ENCODE measurements at regions of chr9 and their contacts with region 1.

Region 1: DNA sequence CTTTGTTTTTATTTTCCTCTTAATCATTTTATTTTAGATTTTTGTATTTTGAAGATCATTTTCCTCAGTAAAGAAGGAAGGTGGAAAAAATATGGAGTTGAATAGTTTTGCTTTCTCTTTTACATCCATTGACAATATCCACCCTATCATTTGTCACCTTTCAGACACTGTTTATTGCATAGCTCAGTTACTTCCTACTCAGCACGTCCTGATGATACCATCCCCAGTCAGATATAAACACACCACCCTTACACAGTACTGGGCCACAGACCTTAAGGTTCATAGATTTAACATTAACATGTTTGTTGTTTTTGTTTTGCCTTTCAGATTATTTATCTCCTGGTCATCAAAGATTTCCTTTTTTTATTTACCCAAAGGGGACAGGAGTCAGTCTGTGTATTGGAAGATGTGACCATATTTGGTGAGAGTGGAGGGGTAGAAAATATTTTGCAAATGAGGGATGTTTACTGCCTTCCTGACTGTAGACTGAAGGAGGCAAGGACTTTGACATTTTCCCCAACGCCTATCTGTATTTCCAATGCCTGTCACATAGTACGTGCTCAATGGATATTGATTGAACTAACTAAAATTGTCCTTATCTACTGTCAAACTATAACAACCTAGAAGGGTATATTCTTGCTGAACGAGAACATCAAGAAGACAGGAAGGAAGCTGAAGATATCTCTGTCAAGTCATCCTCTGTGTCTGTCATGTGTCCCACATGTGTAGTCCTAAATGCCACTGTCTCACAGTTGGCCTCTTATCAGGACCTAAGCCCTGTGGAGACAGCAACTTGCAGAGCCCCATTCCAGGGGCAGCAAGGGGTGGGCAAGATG is 15.6 kb downstream of the STX17 start:
- DNase-seq: no peak
- H3K4me3 ChIP-seq: no peak overlapping the region
- CTCF ChIP-seq: no peak

Region 2: DNA sequence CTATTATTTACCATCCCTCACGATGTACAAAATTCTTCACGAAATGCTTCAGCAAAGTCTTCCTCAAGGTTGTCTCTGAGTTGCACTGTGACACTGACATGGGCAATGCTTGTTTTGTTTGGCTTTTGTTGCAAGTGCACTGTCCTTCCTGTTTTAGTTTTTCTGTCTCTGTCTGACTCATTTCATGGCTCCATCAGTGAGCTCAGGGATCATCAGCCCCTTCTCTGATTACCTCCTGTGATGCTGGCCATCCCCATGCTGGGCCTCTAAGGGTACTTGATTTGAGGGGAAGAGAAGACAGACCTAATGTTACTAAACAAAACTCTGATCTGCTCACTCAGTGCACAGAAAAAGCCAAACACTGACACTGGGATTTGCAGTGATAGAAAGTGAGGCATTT is 53.2 kb before region 1 on chr9:
- in situ Hi-C with region 1: loop called (anchors 10 kb)
- DNase-seq: no peak
- H3K4me3 ChIP-seq: no peak overlapping the region
- CTCF ChIP-seq: no peak

Measured in astrocyte of the cerebellum (primary cell).